ENCODE measurements at regions of chr3 and their contacts with region 1.

Region 1: GRCh38 chr3:141575879-141576743 is 89.3 kb downstream of the RASA2 start:
- DNase-seq: no peak
- ATAC-seq: peak in 2 of 4 donors; percentile 65 to 71
- H3K4me3 ChIP-seq: no peak overlapping the region
- H3K27ac ChIP-seq: peak overlapping the region in 1 of 12 donors; percentile 63
- H3K4me1 ChIP-seq: peaks cover 0 to 9% (median 0%) of the 10 kb centered on the region in 12 donors
- H3K27me3 ChIP-seq: no peaks in the 10 kb centered on the region
- CTCF ChIP-seq: peak; percentile 31 to 71 (median 56)
- POLR2A ChIP-seq: no peak

Region 2: GRCh38 chr3:141507392-141508066 is 68.6 kb before region 1 on chr3:
- intact Hi-C with region 1: no loop called
- DNase-seq: no peak
- ATAC-seq: no peak
- H3K4me3 ChIP-seq: no peak overlapping the region
- H3K27ac ChIP-seq: no peak overlapping the region
- H3K4me1 ChIP-seq: peaks cover 0 to 30% (median 0%) of the 10 kb centered on the region in 12 donors
- H3K27me3 ChIP-seq: no peaks in the 10 kb centered on the region
- CTCF ChIP-seq: no peak
- POLR2A ChIP-seq: no peak

Region 3: DNA sequence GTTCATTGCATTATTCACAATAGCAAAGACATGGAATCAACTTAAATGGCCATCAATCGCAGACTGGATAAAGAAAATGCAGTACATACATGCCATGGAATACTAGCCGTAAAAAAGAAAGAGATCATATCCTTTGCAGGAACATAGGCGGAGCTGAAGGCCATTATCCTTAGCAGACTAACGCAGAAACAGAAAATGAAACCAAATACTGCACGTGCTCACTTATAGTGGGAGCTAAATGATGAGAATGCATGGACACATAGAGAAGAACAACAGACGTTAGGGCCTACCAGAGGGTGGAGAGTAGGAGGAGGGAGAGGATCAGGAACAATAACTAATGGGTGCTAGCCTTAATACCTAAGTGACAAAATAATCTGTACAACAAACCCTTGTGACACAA is 31.4 kb before region 1 on chr3:
- intact Hi-C with region 1: no loop called
- DNase-seq: no peak
- ATAC-seq: peak in 2 of 4 donors; percentile 49 to 71
- H3K4me3 ChIP-seq: no peak overlapping the region
- H3K27ac ChIP-seq: peak overlapping the region in 1 of 12 donors; percentile 50
- H3K4me1 ChIP-seq: peaks cover 0 to 17% (median 0%) of the 10 kb centered on the region in 12 donors
- H3K27me3 ChIP-seq: no peaks in the 10 kb centered on the region
- CTCF ChIP-seq: no peak
- POLR2A ChIP-seq: no peak

Region 4: GRCh38 chr3:141686466-141687291 is 110.6 kb after region 1 on chr3:
- intact Hi-C with region 1: no loop called
- DNase-seq: peak; percentile 73 to 82 (median 80)
- ATAC-seq: peak; percentile 94 to 98 (median 96)
- H3K4me3 ChIP-seq: peak overlapping the region in 11 of 12 donors; percentile 9 to 56 (median 41)
- H3K27ac ChIP-seq: peak overlapping the region in 11 of 12 donors; percentile 33 to 85 (median 64)
- H3K4me1 ChIP-seq: peaks cover 0 to 35% (median 7%) of the 10 kb centered on the region in 12 donors
- H3K27me3 ChIP-seq: no peaks in the 10 kb centered on the region
- CTCF ChIP-seq: no peak
- POLR2A ChIP-seq: no peak

Region 5: DNA sequence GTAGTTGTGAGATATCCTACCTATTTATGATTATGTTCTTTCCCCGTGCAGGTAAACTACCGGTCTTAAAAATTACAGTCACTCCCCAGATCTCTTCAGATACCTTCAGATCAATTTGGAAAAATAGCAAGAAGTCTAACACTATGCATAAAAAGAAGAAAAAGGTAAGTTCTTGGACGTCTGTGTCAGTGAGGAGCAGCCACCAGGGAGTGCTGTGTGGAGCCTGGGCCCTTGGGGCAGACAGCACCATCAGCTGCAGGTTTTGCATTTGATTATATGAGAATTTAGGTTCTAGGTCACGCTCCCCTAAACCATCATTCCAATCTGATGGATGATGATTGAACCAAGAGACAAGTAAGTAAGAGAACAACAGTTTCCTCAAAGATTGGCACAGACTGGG is 153.1 kb after region 1 on chr3:
- intact Hi-C with region 1: loop called in 3 of 10 experiments (anchors 10 kb)
- DNase-seq: no peak
- ATAC-seq: no peak
- H3K4me3 ChIP-seq: no peak overlapping the region
- H3K27ac ChIP-seq: no peak overlapping the region
- H3K4me1 ChIP-seq: no peaks in the 10 kb centered on the region
- H3K27me3 ChIP-seq: no peaks in the 10 kb centered on the region
- CTCF ChIP-seq: no peak
- POLR2A ChIP-seq: no peak

Region 6: GRCh38 chr3:141875374-141875892 is 299.3 kb after region 1 on chr3:
- intact Hi-C with region 1: loop called in 2 of 10 experiments (anchors 10 kb)
- DNase-seq: peak; percentile 87 to 90 (median 87)
- ATAC-seq: peak; percentile 88 to 96 (median 90)
- H3K4me3 ChIP-seq: peak overlapping the region; percentile 52 to 99 (median 90)
- H3K27ac ChIP-seq: peak overlapping the region; percentile 94 to 100 (median 99)
- H3K4me1 ChIP-seq: peaks cover 6 to 38% (median 19%) of the 10 kb centered on the region in 12 donors
- H3K27me3 ChIP-seq: no peaks in the 10 kb centered on the region
- CTCF ChIP-seq: peak; percentile 77 to 96 (median 88)
- POLR2A ChIP-seq: no peak

Region 7: DNA sequence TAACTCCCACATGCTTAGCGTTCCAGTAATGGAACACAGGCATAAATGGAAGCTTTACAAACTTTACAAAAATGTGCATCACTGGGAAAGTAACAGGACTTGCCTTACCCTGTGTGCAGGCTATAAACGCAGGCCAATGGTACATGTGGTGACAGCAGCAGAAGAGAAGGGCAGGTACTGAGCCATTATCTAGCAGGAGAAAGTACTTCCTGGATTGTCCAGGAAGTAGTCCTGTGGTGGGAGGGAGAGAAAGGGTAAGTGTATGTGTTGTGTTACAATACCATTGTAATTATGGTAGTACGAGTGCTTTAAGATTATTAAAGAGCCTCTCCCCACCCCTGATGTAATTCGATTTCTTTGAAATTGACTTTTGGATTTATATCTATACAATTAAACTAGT is 305.6 kb after region 1 on chr3:
- intact Hi-C with region 1: loop called in 2 of 10 experiments (anchors 10 kb)
- DNase-seq: no peak
- ATAC-seq: no peak
- H3K4me3 ChIP-seq: no peak overlapping the region
- H3K27ac ChIP-seq: no peak overlapping the region
- H3K4me1 ChIP-seq: peaks cover 4 to 47% (median 16%) of the 10 kb centered on the region in 12 donors
- H3K27me3 ChIP-seq: no peaks in the 10 kb centered on the region
- CTCF ChIP-seq: no peak
- POLR2A ChIP-seq: no peak